SK-MEL-5 (cell line): ENCODE measurements at regions of chr1 and their contacts with region 1.

Region 1: DNA sequence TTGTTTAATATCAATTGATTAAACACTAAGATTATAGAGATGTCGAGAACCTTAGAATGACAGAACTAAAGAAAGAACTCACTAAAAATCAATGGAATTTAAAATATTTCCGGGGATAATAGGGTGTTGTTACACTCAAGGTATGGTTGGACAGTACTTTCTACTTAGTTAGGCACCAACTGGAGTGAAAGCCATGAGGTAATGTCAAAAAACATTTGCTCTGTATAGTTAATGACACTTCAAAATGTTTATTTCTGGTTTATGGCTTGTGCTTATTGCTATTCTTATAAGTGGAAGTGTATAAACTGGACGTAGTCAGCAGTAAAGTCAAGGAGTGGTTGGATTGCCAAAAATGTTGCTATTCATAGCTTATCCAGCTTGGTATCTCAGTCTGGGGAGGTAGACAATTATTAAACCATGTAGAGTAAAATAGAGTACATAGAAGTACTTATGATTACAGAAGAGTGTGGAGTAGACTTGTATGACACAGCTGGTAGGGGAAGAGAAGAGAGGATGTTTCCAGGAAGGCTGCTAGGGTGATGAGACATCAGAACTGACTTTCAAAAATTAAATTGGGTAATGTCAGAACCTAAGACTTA is 56.5 kb upstream of the BMP8A start:
- DNase-seq: no peak

Region 2: GRCh38 chr1:39258146-39258924 is 176.6 kb before region 1 on chr1:
- in situ Hi-C with region 1: no loop called
- DNase-seq: peak; percentile 73

Region 3: GRCh38 chr1:39293375-39294070 is 141.4 kb before region 1 on chr1:
- in situ Hi-C with region 1: loop called (anchors 25 kb)
- DNase-seq: peak; percentile 81

Region 4: DNA sequence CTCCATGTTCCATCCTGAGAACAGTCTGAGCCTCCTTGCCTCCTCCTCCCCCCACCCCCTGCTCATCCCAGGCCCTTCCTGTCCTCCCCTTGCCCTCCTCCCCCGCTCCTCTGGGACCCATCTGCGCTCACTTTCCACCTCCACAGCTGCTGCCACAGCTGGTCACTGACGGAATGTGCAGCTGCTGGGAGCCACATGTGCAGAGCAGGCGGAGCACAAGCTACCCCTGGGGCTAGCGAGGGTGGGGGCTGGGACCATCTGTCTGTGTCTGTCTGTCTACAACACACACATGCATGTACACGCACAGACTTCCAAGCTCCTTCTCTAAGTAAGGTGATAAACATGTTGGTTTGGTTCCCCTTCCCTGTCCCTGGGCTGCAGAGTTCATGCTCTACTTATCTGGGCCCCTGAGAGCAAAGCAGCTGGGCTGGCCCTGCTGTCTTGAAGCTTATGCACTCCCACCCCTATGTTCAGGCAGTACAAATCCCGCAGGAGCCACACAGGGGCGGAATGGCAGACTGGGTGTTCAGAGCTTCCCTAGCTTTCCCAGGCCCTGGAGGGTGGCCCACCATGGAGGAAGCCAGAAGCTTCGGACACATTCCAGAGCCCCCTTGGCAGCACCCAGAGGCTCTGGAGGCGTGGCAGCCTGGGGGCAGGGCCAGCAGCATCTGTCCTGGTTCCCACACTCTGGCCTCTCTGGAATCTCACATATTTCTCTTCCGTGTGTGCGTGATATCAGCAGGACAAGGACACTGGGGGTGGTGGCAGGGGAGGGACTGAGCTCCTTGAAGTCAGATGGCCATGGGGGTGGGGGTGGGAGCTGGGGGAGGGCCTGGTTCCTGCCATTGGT is 211.6 kb after region 1 on chr1:
- in situ Hi-C with region 1: no loop called
- DNase-seq: peak; percentile 43